Activated CD8-positive, alpha-beta T cell treated with anti-CD3 and anti-CD28 coated beads for 36 hours (primary cell): ENCODE measurements at regions of chr17 and their contacts with region 1.

Region 1: GRCh38 chr17:20315821-20316220 is 151.5 kb downstream of the LGALS9B start:
- DNase-seq: no peak
- ATAC-seq: no peak
- H3K4me3 Mint-ChIP-seq: no peak overlapping the region
- H3K27ac Mint-ChIP-seq: no peak overlapping the region
- H3K4me1 Mint-ChIP-seq: no peaks in the 10 kb centered on the region
- H3K27me3 Mint-ChIP-seq: no peaks in the 10 kb centered on the region
- CTCF ChIP-seq: no peak

Region 2: GRCh38 chr17:20226814-20227482 is 88.9 kb before region 1 on chr17:
- CTCF ChIA-PET with region 1: interaction called, 44 read pairs
- POLR2A ChIA-PET with region 1: no interaction called
- intact Hi-C with region 1: loop called (anchors 5 kb)
- DNase-seq: peak; percentile 87
- ATAC-seq: peak; percentile 100
- H3K4me3 Mint-ChIP-seq: no peak overlapping the region
- H3K27ac Mint-ChIP-seq: no peak overlapping the region
- H3K4me1 Mint-ChIP-seq: peaks cover 8% of the 10 kb centered on the region
- H3K27me3 Mint-ChIP-seq: no peaks in the 10 kb centered on the region
- CTCF ChIP-seq: peak; percentile 90

Region 3: GRCh38 chr17:20234276-20234675 is 81.5 kb before region 1 on chr17:
- CTCF ChIA-PET with region 1: interaction called, 44 read pairs
- POLR2A ChIA-PET with region 1: no interaction called
- intact Hi-C with region 1: loop called (anchors 5 kb)
- DNase-seq: peak; percentile 86
- ATAC-seq: peak; percentile 99
- H3K4me3 Mint-ChIP-seq: no peak overlapping the region
- H3K27ac Mint-ChIP-seq: peak overlapping the region; percentile 88
- H3K4me1 Mint-ChIP-seq: peaks cover 23% of the 10 kb centered on the region
- H3K27me3 Mint-ChIP-seq: no peaks in the 10 kb centered on the region
- CTCF ChIP-seq: no peak

Region 4: DNA sequence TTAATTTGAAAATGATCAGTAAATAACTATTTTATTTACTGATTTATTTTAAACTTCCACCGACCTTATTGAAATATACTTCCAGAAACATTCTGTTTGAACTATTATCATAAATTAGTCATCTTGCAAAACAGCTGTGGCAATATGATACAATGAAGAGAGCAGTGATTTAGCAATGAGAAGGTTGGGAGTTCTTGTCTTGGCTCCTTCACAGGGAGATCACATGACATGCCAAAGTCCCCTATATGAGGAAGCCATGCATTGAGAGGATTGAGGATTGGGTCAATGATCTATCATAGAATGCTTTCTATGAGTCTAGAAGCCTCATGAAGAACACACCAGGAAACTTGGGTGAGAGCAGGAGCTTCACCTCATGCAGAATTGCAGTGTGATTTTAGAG is 71.2 kb before region 1 on chr17:
- CTCF ChIA-PET with region 1: no interaction called
- POLR2A ChIA-PET with region 1: no interaction called
- intact Hi-C with region 1: no loop called
- DNase-seq: no peak
- ATAC-seq: no peak
- H3K4me3 Mint-ChIP-seq: no peak overlapping the region
- H3K27ac Mint-ChIP-seq: no peak overlapping the region
- H3K4me1 Mint-ChIP-seq: peaks cover 24% of the 10 kb centered on the region
- H3K27me3 Mint-ChIP-seq: no peaks in the 10 kb centered on the region
- CTCF ChIP-seq: no peak

Region 5: DNA sequence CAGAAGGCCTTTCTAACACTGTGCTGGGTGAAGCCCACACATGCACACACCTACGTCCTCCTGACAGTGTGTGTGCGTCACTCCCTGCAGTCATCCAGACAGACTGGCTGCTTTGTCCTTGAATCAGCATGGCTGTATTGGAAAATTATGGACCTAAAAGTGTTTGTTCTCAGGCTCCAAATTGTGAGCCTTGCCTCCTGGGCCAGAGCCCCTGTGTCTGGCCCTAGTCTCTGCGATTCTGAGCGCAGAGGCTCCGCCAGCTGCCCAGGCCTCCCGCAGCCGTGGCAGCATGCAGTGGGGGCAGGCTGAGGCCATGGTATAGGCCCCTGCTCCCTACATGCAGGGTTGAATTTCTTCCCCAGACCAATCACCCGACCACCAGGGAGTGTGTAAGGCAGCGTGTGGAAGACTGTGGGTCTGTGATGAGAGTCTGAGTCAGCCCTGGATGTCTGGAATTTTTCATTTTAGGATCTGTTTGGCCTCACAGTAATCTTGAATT is 15.3 kb before region 1 on chr17:
- CTCF ChIA-PET with region 1: no interaction called
- POLR2A ChIA-PET with region 1: no interaction called
- intact Hi-C with region 1: no loop called
- DNase-seq: no peak
- ATAC-seq: no peak
- H3K4me3 Mint-ChIP-seq: no peak overlapping the region
- H3K27ac Mint-ChIP-seq: no peak overlapping the region
- H3K4me1 Mint-ChIP-seq: no peaks in the 10 kb centered on the region
- H3K27me3 Mint-ChIP-seq: no peaks in the 10 kb centered on the region
- CTCF ChIP-seq: no peak